BJ (cell line): ENCODE measurements at regions of chr18 and their contacts with region 1.

Region 1: GRCh38 chr18:74116633-74117554 is 30.7 kb downstream of the FBXO15 start:
- DNase-seq: no peak
- H3K4me3 ChIP-seq: no peak overlapping the region
- H3K27me3 ChIP-seq: no peaks in the 10 kb centered on the region
- CTCF ChIP-seq: peak; percentile 72

Region 2: GRCh38 chr18:72762515-72763122 is 1354.3 kb before region 1 on chr18:
- CTCF ChIA-PET with region 1: interaction called, 45 read pairs
- POLR2A ChIA-PET with region 1: no interaction called
- DNase-seq: no peak
- H3K4me3 ChIP-seq: no peak overlapping the region
- H3K27me3 ChIP-seq: no peaks in the 10 kb centered on the region
- CTCF ChIP-seq: peak; percentile 67